HEK293T (cell line): ENCODE measurements at regions of chr10 and their contacts with region 1.

Region 1: GRCh38 chr10:114345701-114346100 is 58.6 kb downstream of the AFAP1L2 start:
- DNase-seq: no peak

Region 2: DNA sequence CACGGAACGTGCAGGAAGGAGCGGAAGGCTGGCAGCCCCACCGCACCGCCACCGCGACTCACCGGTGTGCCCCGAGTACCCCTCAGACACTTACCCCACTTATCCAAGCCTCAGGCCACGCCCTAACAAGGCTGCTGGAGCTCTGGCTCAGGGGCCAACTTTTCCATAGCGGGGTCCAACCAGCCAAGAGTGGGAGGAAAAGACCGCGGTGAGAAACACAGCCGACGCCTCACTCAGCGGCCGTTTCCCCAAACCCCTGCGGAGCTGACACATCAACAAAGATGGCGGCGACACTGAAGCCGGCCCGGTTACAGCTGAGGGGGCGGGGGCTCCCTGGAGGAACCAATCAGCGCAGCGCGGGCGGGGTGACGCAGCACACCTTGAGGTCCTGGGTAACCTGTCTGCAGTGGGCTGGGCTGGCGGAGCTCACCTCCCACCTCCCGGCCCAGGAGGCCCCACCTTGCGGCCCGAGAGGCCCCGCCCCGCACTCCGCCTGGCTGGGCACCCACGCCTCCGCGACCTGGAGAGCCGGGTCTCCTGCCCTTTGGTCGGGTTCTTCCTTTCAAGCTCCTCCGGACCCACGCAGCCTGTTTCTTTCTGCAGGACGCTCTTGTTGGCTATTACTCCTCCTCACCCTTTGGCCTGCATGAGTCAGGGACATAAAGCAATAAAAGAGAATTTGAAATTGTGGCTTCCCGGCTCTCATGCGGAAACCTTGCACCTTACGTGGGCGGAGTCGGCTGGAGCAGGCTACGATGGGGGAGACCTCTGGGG is 171.6 kb before region 1 on chr10 and contains the start of gene CCDC186:
- CTCF ChIA-PET with region 1: interaction called, 10 read pairs
- POLR2A ChIA-PET with region 1: no interaction called
- DNase-seq: peak; percentile 98

Region 3: GRCh38 chr10:114412907-114413386 is 67.2 kb after region 1 on chr10:
- CTCF ChIA-PET with region 1: no interaction called
- POLR2A ChIA-PET with region 1: no interaction called
- DNase-seq: no peak